Astrocyte of the cerebellum (primary cell): ENCODE measurements at regions of chr20 and their contacts with region 1.

Region 1: DNA sequence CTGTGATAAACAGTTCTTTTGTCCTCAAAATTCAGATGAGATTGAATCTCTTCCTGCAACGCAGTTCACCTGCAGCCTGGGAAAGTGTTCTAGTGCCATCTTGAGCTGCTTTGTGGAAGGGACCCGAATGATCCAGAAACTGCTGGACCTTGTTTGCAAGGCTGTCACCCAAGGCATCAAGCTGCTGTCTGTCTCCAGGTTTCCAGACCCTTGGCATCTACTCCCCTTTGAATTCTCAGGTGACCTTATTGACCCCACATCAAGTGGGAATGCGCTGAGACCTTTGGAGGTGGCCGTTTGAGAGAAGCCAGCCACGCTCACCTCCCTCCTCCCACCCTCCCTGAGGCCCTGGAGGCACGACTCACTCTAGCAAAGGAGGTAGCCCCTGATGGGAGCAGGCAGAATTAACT is 112.5 kb downstream of the EDN3 start:
- DNase-seq: no peak
- H3K4me3 ChIP-seq: no peak overlapping the region
- CTCF ChIP-seq: no peak

Region 2: DNA sequence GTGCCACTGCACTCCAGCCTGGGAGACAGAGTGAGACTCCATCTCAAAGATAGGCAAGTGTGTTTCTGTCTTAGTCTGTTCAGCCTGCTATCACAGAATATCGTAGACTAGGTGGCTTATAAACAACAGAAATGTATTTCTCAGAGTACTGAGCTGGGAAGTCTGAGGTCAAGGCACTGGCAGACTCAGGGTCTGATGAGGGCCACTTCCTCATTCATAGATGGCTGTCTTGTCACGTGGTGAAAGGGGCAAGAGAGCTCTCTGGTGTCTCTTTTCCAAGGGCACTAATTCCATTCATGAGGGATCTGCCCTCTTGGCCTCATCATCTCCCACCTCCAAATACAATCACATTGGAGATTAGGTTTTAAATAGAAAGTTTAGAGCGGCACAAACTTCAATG is 95.8 kb after region 1 on chr20:
- in situ Hi-C with region 1: loop called (anchors 5 kb)
- DNase-seq: no peak
- H3K4me3 ChIP-seq: no peak overlapping the region
- CTCF ChIP-seq: no peak